Stomach (tissue), 19 donors: ENCODE measurements at regions of chr16 and their contacts with region 1.

Region 1: GRCh38 chr16:85114909-85115567 is 2.8 kb upstream of the CIBAR2 start:
- DNase-seq: peak; percentile 91 to 94
- H3K4me3 ChIP-seq: peak overlapping the region in 2 of 4 donors; percentile 17 to 31
- H3K27ac ChIP-seq: peak overlapping the region in 4 of 5 donors; percentile 46 to 67 (median 49)
- H3K4me1 ChIP-seq: peaks cover 0 to 14% (median 5%) of the 10 kb centered on the region in 4 donors
- H3K27me3 ChIP-seq: no peaks in the 10 kb centered on the region
- CTCF ChIP-seq: peak in 5 of 7 experiments; percentile 89 to 97 (median 95)
- EP300 ChIP-seq: no peak
- POLR2A ChIP-seq: no peak

Region 2: GRCh38 chr16:85195900-85196772 is 81.1 kb after region 1 on chr16:
- intact Hi-C with region 1: loop called (anchors 10 kb)
- DNase-seq: peak in 1 of 2 donors; percentile 76
- H3K4me3 ChIP-seq: no peak overlapping the region
- H3K27ac ChIP-seq: peak overlapping the region in 4 of 5 donors; percentile 44 to 81 (median 64)
- H3K4me1 ChIP-seq: peaks cover 18 to 68% (median 47%) of the 10 kb centered on the region in 4 donors
- H3K27me3 ChIP-seq: no peaks in the 10 kb centered on the region
- CTCF ChIP-seq: no peak
- EP300 ChIP-seq: no peak
- POLR2A ChIP-seq: no peak

Region 3: GRCh38 chr16:85245307-85246172 is 130.5 kb after region 1 on chr16:
- intact Hi-C with region 1: loop called (anchors 10 kb)
- DNase-seq: peak; percentile 44 to 91
- H3K4me3 ChIP-seq: no peak overlapping the region
- H3K27ac ChIP-seq: no peak overlapping the region
- H3K4me1 ChIP-seq: peaks cover 0 to 14% (median 8%) of the 10 kb centered on the region in 4 donors
- H3K27me3 ChIP-seq: no peaks in the 10 kb centered on the region
- CTCF ChIP-seq: peak in 5 of 7 experiments; percentile 74 to 92 (median 84)
- EP300 ChIP-seq: no peak
- POLR2A ChIP-seq: no peak